ENCODE measurements at regions of chr1 and their contacts with region 1.

Region 1: GRCh38 chr1:10494754-10495474 is 20.2 kb downstream of the PEX14 start:
- DNase-seq: peak; percentile 66 to 88 (median 81)
- ATAC-seq: peak; percentile 76
- H3K4me3 ChIP-seq: peak overlapping the region; percentile 50 to 59
- H3K4me3 Mint-ChIP-seq: peak overlapping the region; percentile 83
- H3K27ac ChIP-seq: peak overlapping the region; percentile 72 to 80
- H3K27ac Mint-ChIP-seq: peak overlapping the region; percentile 98
- H3K4me1 ChIP-seq: peaks cover 21% of the 10 kb centered on the region
- H3K4me1 Mint-ChIP-seq: peaks cover 42% of the 10 kb centered on the region
- H3K27me3 ChIP-seq: no peaks in the 10 kb centered on the region
- H3K27me3 Mint-ChIP-seq: no peaks in the 10 kb centered on the region
- CTCF ChIP-seq: peak; percentile 99

Region 2: GRCh38 chr1:10430216-10431069 is 64.5 kb before region 1 on chr1 and contains the start of gene CENPS:
- CTCF ChIA-PET with region 1: interaction called, 38 read pairs
- POLR2A ChIA-PET with region 1: interaction called, 11 read pairs
- intact Hi-C with region 1: loop called in 1 of 2 experiments (anchors 1 kb)
- DNase-seq: peak; percentile 72 to 95 (median 92)
- ATAC-seq: peak; percentile 85
- H3K4me3 ChIP-seq: peak within 1 kb of the TSS; percentile 85 to 96
- H3K4me3 Mint-ChIP-seq: peak within 1 kb of the TSS; percentile 89
- H3K27ac ChIP-seq: peak within 1 kb of the TSS; percentile 81 to 86
- H3K27ac Mint-ChIP-seq: peak within 1 kb of the TSS; percentile 91
- H3K4me1 ChIP-seq: peaks cover 18% of the 10 kb centered on the region
- H3K4me1 Mint-ChIP-seq: peaks cover 23% of the 10 kb centered on the region
- H3K27me3 ChIP-seq: no peaks in the 10 kb centered on the region
- H3K27me3 Mint-ChIP-seq: no peaks in the 10 kb centered on the region
- CTCF ChIP-seq: peak; percentile 97
- total RNA-seq, gene CENPS: 2.0 to 3.5 TPM

Region 3: GRCh38 chr1:10484521-10484920 is 10.4 kb before region 1 on chr1:
- CTCF ChIA-PET with region 1: interaction called, 11 read pairs
- POLR2A ChIA-PET with region 1: interaction called, 3 read pairs
- intact Hi-C with region 1: no loop called
- DNase-seq: no peak
- ATAC-seq: no peak
- H3K4me3 ChIP-seq: no peak overlapping the region
- H3K4me3 Mint-ChIP-seq: no peak overlapping the region
- H3K27ac ChIP-seq: no peak overlapping the region
- H3K27ac Mint-ChIP-seq: no peak overlapping the region
- H3K4me1 ChIP-seq: no peaks in the 10 kb centered on the region
- H3K4me1 Mint-ChIP-seq: peaks cover 11% of the 10 kb centered on the region
- H3K27me3 ChIP-seq: no peaks in the 10 kb centered on the region
- H3K27me3 Mint-ChIP-seq: no peaks in the 10 kb centered on the region
- CTCF ChIP-seq: no peak

Region 4: GRCh38 chr1:10530281-10530740 is 35.4 kb after region 1 on chr1:
- CTCF ChIA-PET with region 1: interaction called, 14 read pairs
- POLR2A ChIA-PET with region 1: no interaction called
- intact Hi-C with region 1: no loop called
- DNase-seq: peak in 1 of 9 experiments; percentile 20
- ATAC-seq: no peak
- H3K4me3 ChIP-seq: no peak overlapping the region
- H3K4me3 Mint-ChIP-seq: no peak overlapping the region
- H3K27ac ChIP-seq: no peak overlapping the region
- H3K27ac Mint-ChIP-seq: no peak overlapping the region
- H3K4me1 ChIP-seq: no peaks in the 10 kb centered on the region
- H3K4me1 Mint-ChIP-seq: peaks cover 18% of the 10 kb centered on the region
- H3K27me3 ChIP-seq: no peaks in the 10 kb centered on the region
- H3K27me3 Mint-ChIP-seq: no peaks in the 10 kb centered on the region
- CTCF ChIP-seq: no peak

Region 5: DNA sequence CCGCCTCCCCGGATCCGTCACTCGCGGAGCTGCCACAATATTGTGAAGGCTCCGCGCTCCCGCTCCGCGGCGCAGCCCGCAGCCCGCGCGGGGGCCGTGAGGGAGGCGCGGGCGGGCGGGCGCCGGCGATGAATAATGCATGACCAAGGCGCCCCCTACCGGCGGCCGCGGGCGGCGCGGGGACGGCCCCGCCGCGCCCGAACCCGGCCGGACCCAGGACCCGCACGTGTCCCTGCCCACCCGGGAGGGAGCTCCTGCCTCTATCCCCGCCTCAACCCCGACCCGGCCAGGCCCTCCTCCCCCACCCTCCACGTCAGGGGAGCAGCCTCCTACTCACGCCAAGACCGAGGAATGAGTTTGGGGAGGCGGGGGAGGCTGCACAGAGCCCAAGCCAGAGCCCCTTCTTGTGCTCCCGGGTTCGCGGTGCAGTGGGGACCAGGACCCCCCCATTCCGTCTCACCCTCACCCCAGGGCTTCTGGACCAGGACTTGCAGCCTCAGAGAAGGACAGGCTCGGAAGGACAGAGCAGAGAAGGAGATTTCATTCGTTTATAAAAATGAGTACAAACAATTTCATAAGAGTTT is 372.3 kb after region 1 on chr1:
- CTCF ChIA-PET with region 1: interaction called, 16 read pairs
- POLR2A ChIA-PET with region 1: no interaction called
- intact Hi-C with region 1: loop called (anchors 1 kb)
- DNase-seq: peak; percentile 23 to 82 (median 69)
- ATAC-seq: peak; percentile 81
- H3K4me3 ChIP-seq: peak overlapping the region; percentile 21 to 28
- H3K4me3 Mint-ChIP-seq: peak overlapping the region; percentile 57
- H3K27ac ChIP-seq: no peak overlapping the region
- H3K27ac Mint-ChIP-seq: no peak overlapping the region
- H3K4me1 ChIP-seq: peaks cover 12% of the 10 kb centered on the region
- H3K4me1 Mint-ChIP-seq: peaks cover 19% of the 10 kb centered on the region
- H3K27me3 ChIP-seq: peaks cover 2 to 15% of the 10 kb centered on the region in 2 experiments
- H3K27me3 Mint-ChIP-seq: peaks cover 52% of the 10 kb centered on the region
- CTCF ChIP-seq: peak; percentile 74

Region 6: DNA sequence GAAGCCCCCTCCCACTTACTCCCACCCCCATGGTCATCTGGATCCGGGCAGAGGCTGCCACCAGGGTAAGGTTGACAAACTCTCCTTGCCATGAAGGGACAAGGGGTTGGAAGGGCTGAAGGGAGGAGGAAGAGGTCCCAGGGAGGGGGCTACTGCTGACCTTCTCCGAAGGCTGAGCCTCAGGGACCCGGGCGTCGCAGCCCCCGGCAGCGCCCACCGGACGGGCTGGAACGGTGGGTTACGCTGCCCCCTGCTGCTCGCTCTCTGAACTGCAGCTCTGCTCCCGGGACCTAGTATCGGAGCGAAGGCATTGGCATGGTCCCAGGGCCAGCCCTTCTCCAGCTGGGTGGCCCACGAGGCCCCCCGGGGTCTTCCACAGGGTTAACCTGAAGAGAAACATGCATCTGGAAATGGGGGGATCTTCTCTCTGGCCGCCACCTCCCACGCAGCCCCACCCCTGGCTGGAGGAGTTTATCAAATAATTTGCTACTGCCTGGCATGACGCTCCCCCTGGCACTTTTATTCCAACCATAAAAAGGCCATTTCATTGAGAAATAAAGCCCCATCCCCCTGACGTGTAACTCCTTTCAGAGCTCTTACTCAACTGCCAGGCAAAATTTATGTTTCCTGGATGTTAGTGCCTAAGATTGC is 447.1 kb after region 1 on chr1:
- CTCF ChIA-PET with region 1: interaction called, 15 read pairs
- POLR2A ChIA-PET with region 1: interaction called, 3 read pairs
- intact Hi-C with region 1: loop called (anchors 1 to 2 kb)
- DNase-seq: peak; percentile 47 to 78 (median 70)
- ATAC-seq: peak; percentile 75
- H3K4me3 ChIP-seq: no peak overlapping the region
- H3K4me3 Mint-ChIP-seq: no peak overlapping the region
- H3K27ac ChIP-seq: no peak overlapping the region
- H3K27ac Mint-ChIP-seq: no peak overlapping the region
- H3K4me1 ChIP-seq: peaks cover 43% of the 10 kb centered on the region
- H3K4me1 Mint-ChIP-seq: peaks cover 41% of the 10 kb centered on the region
- H3K27me3 ChIP-seq: peaks cover 6 to 7% of the 10 kb centered on the region in 2 experiments
- H3K27me3 Mint-ChIP-seq: peaks cover 25% of the 10 kb centered on the region
- CTCF ChIP-seq: peak; percentile 82

Measured in CD8-positive, alpha-beta T cell (primary cell).